ENCODE measurements at regions of chr11 and their contacts with region 1.

Region 1: GRCh38 chr11:103624708-103625623 is 411.5 kb upstream of the DDI1 start:
- DNase-seq: no peak
- H3K4me3 ChIP-seq: no peak overlapping the region
- H3K27ac ChIP-seq: no peak overlapping the region
- H3K4me1 ChIP-seq: no peaks in the 10 kb centered on the region
- H3K27me3 ChIP-seq: no peaks in the 10 kb centered on the region
- CTCF ChIP-seq: no peak
- EP300 ChIP-seq: no peak
- POLR2A ChIP-seq: no peak

Region 2: DNA sequence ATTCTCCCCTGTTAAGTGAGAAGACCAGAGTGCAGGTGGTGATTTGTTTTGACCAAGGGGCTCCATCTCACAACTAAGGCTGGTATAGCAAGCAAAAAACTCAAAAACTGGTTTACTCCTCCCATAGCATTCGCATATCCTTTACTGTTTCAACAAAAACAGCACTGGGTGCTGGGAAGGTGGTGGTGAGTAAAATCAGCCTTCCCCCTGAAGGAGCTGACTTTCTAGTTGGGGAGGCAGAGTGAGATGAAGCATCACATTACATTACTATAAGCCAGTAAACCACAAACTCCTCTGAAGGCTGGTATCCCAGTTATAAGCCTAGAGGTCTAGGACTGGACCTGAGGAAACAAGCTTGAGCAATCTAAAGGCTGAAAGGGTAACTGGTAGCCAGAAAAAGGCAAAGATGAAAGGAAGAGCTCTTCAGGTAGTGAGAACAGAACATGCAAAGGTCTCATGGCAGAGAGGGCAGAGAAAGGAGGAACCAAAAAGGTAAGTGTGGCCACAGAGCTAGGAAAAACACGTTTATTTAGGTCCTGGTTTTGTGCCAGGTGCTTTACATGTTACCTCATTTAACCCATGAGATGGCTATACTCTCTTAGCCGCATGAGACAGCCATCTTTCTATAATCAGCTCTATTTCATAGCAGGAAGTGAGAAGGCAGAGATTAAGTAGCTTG is 1194.7 kb before region 1 on chr11:
- intact Hi-C with region 1: loop called in 1 of 4 experiments (anchors 10 kb)
- DNase-seq: no peak
- H3K4me3 ChIP-seq: no peak overlapping the region
- H3K27ac ChIP-seq: no peak overlapping the region
- H3K4me1 ChIP-seq: peaks cover 4% of the 10 kb centered on the region
- H3K27me3 ChIP-seq: no peaks in the 10 kb centered on the region
- CTCF ChIP-seq: no peak
- EP300 ChIP-seq: no peak
- POLR2A ChIP-seq: no peak

Region 3: GRCh38 chr11:103241574-103241973 is 383.4 kb before region 1 on chr11:
- intact Hi-C with region 1: no loop called
- DNase-seq: no peak
- H3K4me3 ChIP-seq: no peak overlapping the region
- H3K27ac ChIP-seq: no peak overlapping the region
- H3K4me1 ChIP-seq: no peaks in the 10 kb centered on the region
- H3K27me3 ChIP-seq: no peaks in the 10 kb centered on the region
- CTCF ChIP-seq: no peak
- EP300 ChIP-seq: no peak
- POLR2A ChIP-seq: no peak